ENCODE measurements at regions of chr4 and their contacts with region 1.

Region 1: GRCh38 chr4:76035141-76035540 is 729 bp downstream of the CXCL11 start:
- DNase-seq: no peak
- ATAC-seq: no peak
- H3K4me3 Mint-ChIP-seq: no peak overlapping the region
- H3K27ac Mint-ChIP-seq: no peak overlapping the region
- H3K4me1 Mint-ChIP-seq: no peaks in the 10 kb centered on the region
- H3K27me3 Mint-ChIP-seq: no peaks in the 10 kb centered on the region
- CTCF ChIP-seq: no peak

Region 2: DNA sequence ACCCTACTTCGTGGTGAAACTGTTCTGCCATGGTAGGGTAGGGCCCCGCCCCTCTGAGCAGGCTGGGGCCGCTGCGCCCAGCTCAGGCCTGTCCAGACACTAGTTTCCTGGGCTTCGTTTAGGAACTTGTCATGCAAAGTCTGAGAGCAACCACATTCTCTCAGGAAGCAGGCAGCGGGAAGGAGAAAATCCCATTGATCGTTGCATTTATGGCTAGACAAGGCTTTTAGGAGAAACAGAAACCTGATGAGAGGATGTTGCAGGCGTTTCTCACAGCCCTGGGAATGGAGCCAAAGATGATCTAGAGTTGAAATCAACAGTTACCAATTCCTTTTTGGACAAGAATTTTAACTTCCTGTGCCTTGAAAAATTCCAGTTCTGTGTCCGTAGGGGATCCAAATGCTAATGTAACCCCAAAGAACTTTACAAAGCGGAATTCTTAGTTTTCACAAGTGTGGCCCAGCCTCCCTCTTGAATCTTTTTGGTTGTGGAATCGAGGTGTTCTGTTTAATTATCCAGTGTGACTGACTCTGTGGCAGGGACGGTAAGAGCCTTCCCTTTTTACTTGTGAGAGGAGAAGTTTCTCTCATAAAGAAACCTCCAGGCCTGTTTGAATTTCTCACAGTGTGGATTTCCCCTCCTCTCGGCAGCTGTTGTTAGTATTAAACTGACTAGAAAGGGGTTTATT is 23.3 kb before region 1 on chr4:
- CTCF ChIA-PET with region 1: no interaction called
- POLR2A ChIA-PET with region 1: no interaction called
- intact Hi-C with region 1: loop called (anchors 2 kb)
- DNase-seq: no peak
- ATAC-seq: peak; percentile 31
- H3K4me3 Mint-ChIP-seq: no peak overlapping the region
- H3K27ac Mint-ChIP-seq: peak overlapping the region; percentile 47
- H3K4me1 Mint-ChIP-seq: peaks cover 20% of the 10 kb centered on the region
- H3K27me3 Mint-ChIP-seq: no peaks in the 10 kb centered on the region
- CTCF ChIP-seq: no peak